A673 (cell line): ENCODE measurements at regions of chr1 and their contacts with region 1.

Region 1: GRCh38 chr1:247390116-247390791 is 25.7 kb upstream of the NLRP3 start:
- DNase-seq: peak; percentile 79
- H3K4me3 ChIP-seq: no peak overlapping the region
- H3K27ac ChIP-seq: no peak overlapping the region
- H3K4me1 ChIP-seq: no peaks in the 10 kb centered on the region
- H3K27me3 ChIP-seq: no peaks in the 10 kb centered on the region
- CTCF ChIP-seq: peak; percentile 92

Region 2: GRCh38 chr1:246554201-246554600 is 836.1 kb before region 1 on chr1:
- CTCF ChIA-PET with region 1: no interaction called
- POLR2A ChIA-PET with region 1: interaction called, 21 read pairs
- intact Hi-C with region 1: no loop called
- DNase-seq: no peak
- H3K4me3 ChIP-seq: no peak overlapping the region
- H3K27ac ChIP-seq: no peak overlapping the region
- H3K4me1 ChIP-seq: no peaks in the 10 kb centered on the region
- H3K27me3 ChIP-seq: no peaks in the 10 kb centered on the region
- CTCF ChIP-seq: no peak

Region 3: GRCh38 chr1:246893191-246893939 is 496.9 kb before region 1 on chr1:
- CTCF ChIA-PET with region 1: no interaction called
- POLR2A ChIA-PET with region 1: no interaction called
- intact Hi-C with region 1: no loop called
- DNase-seq: no peak
- H3K4me3 ChIP-seq: no peak overlapping the region
- H3K27ac ChIP-seq: no peak overlapping the region
- H3K4me1 ChIP-seq: no peaks in the 10 kb centered on the region
- H3K27me3 ChIP-seq: no peaks in the 10 kb centered on the region
- CTCF ChIP-seq: no peak

Region 4: DNA sequence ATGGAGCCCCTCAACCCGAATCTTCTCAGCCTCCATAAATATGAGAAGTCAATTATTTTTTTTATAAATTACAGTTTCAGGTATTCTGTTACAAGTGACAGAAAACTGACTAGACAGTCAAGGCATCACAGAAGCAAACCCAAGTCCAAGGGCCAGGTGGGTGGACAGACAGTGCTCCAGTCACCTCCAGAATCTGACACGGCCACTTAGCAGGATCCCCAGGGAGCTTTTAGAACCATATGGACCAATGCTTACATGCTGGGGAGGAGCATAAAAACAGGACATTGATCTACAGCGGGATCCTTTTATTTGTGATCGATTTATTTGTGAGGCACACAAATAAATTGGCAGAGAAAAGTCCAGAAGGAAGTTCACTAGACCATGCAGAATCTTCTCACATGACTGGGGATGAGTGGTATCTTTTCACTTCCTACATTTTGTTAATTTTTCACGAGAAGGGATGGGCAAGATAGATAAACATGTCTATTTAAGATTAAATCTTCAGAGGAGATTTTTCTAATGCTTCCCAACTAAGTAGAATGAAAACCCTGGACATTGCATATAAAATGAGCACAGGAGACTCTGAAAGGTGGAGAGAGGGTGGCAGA is 73.6 kb before region 1 on chr1:
- CTCF ChIA-PET with region 1: no interaction called
- POLR2A ChIA-PET with region 1: no interaction called
- intact Hi-C with region 1: no loop called
- DNase-seq: no peak
- H3K4me3 ChIP-seq: no peak overlapping the region
- H3K27ac ChIP-seq: no peak overlapping the region
- H3K4me1 ChIP-seq: no peaks in the 10 kb centered on the region
- H3K27me3 ChIP-seq: no peaks in the 10 kb centered on the region
- CTCF ChIP-seq: no peak

Region 5: DNA sequence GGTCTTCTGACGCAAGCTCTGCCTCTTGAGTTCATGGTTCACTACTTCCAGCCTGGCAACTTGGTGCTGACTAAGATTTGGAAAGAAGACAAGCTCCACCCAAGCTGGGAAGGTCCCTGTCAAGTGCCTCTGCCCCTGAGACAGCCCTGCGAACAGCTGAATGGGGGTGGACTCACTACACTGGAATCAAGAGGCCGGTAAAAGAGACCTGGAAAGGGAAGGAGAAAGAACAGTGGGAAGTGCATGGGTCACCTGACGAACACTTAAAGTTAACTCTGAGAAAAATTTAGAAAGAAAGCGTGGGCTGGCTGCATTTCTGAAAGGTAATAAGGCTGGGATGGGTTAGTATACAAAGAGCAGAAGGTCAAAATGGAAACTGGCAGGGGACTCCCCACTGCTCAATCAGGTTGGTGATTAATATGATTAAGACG is 32.5 kb before region 1 on chr1:
- CTCF ChIA-PET with region 1: no interaction called
- POLR2A ChIA-PET with region 1: no interaction called
- intact Hi-C with region 1: no loop called
- DNase-seq: no peak
- H3K4me3 ChIP-seq: no peak overlapping the region
- H3K27ac ChIP-seq: no peak overlapping the region
- H3K4me1 ChIP-seq: no peaks in the 10 kb centered on the region
- H3K27me3 ChIP-seq: no peaks in the 10 kb centered on the region
- CTCF ChIP-seq: no peak

Region 6: DNA sequence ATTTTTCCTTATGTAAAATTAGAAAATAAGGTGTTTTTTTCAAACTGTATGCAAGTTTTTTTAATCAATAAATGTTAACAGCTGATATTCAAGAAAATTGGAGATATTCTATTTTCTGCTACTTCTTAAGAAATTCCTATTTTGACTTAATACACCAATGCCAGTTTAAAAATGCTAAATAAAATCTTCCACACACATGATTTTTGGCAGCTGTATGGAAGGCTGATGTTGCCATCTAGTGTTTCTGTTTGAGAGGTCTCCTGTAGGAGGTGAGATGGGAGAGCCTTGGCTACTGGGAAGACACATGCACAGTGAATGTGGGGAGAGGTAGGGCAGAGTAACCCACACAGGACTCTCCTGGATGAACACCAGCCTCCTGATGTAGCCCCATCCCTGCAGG is 96.8 kb after region 1 on chr1:
- CTCF ChIA-PET with region 1: interaction called, 3 read pairs
- POLR2A ChIA-PET with region 1: no interaction called
- intact Hi-C with region 1: loop called (anchors 2 kb)
- DNase-seq: peak; percentile 45
- H3K4me3 ChIP-seq: no peak overlapping the region
- H3K27ac ChIP-seq: no peak overlapping the region
- H3K4me1 ChIP-seq: no peaks in the 10 kb centered on the region
- H3K27me3 ChIP-seq: peaks cover 38% of the 10 kb centered on the region
- CTCF ChIP-seq: peak; percentile 57

Region 7: DNA sequence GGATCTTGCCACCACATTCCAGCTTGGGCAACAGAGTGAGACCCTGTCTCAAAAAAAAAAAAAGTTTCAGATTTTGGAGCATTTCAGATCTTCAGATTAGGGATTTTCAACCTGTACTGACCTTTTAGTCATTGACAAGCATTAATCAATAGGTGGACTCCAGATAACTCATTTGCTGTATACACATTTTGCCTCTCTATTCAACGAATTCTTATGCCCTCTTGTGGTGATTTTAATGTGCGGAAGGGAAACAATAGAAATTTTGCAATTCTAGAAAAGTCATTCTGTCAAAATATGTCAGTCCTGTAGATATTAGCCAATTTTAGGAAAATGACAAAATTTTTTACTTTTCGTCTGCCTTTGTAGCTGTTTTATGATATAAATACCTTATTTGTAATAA is 186.2 kb after region 1 on chr1:
- CTCF ChIA-PET with region 1: no interaction called
- POLR2A ChIA-PET with region 1: no interaction called
- intact Hi-C with region 1: loop called (anchors 2 kb)
- DNase-seq: peak; percentile 34
- H3K4me3 ChIP-seq: no peak overlapping the region
- H3K27ac ChIP-seq: no peak overlapping the region
- H3K4me1 ChIP-seq: no peaks in the 10 kb centered on the region
- H3K27me3 ChIP-seq: peaks cover 5% of the 10 kb centered on the region
- CTCF ChIP-seq: peak; percentile 66

Region 8: GRCh38 chr1:247797518-247797917 is 407.3 kb after region 1 on chr1:
- CTCF ChIA-PET with region 1: no interaction called
- POLR2A ChIA-PET with region 1: no interaction called
- intact Hi-C with region 1: no loop called
- DNase-seq: no peak
- H3K4me3 ChIP-seq: no peak overlapping the region
- H3K27ac ChIP-seq: no peak overlapping the region
- H3K4me1 ChIP-seq: no peaks in the 10 kb centered on the region
- H3K27me3 ChIP-seq: no peaks in the 10 kb centered on the region
- CTCF ChIP-seq: no peak